T-cell (primary cell): ENCODE measurements at regions of chrX and their contacts with region 1.

Region 1: DNA sequence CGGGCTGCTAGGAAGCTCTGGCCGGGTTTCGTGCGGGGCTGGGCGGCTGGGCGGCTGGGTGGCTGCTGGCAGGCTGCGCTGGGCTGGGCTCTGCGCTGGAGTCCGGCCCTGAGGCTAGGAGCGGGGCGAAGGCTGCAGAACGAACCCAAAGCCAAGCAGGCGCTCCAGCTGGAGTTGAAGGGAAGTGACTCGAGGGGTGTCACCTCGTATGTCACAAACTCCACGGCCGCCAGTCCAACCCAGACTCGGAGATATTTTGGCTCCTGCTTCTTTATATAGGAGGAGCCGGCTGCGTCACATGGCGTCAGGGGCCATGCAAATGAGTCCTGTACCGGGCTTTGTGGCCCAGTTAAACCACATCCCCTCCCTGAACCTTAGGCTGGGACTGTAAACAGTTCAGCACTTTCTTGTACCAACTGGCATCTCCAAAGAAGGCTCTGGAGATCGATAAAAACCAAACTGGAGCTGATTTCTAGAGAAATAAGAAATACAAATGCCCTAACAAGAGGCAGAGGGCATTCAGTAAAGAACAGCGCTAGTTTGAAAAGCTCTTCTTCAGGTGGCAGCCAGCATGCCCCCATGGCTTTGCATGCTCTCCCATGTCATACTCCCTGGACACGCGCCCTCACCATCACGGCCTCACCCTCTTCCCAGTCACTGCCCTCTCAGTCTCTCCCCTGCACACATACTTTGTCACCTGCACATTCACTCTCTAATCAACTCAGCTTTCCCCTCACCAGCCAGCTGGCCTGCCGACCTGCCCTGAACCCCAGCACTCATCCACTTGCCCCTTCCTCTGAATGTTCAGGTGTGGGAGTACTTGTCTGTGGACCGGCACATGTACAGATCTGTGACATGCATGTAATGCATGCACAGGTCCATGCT is 58.5 kb downstream of the TSC22D3 start:
- DNase-seq: peak; percentile 77 to 94 (median 89)
- ATAC-seq: peak; percentile 71 to 87 (median 84)
- H3K4me3 ChIP-seq: peak overlapping the region; percentile 88 to 94
- H3K4me3 Mint-ChIP-seq: peak overlapping the region; percentile 89 to 96 (median 95)
- H3K27ac ChIP-seq: peak overlapping the region; percentile 99
- H3K27ac Mint-ChIP-seq: peak overlapping the region; percentile 94 to 100
- H3K4me1 ChIP-seq: peaks cover 11 to 51% of the 10 kb centered on the region in 2 experiments
- H3K4me1 Mint-ChIP-seq: peaks cover 49 to 59% (median 58%) of the 10 kb centered on the region in 3 donors
- H3K27me3 ChIP-seq: no peaks in the 10 kb centered on the region
- H3K27me3 Mint-ChIP-seq: peaks cover 0 to 8% of the 10 kb centered on the region in 2 donors

Region 2: GRCh38 chrX:107627838-107628661 is 89.0 kb before region 1 on chrX and contains the start of gene PRPS1:
- CTCF ChIA-PET with region 1: interaction called in 1 of 2 experiments, 4 read pairs
- POLR2A ChIA-PET with region 1: interaction called, 3 to 18 read pairs
- DNase-seq: peak; percentile 69 to 92 (median 87)
- ATAC-seq: peak; percentile 96 to 98 (median 97)
- H3K4me3 ChIP-seq: peak within 1 kb of the TSS; percentile 71 to 87
- H3K4me3 Mint-ChIP-seq: peak within 1 kb of the TSS; percentile 87 to 95 (median 93)
- H3K27ac ChIP-seq: peak within 1 kb of the TSS; percentile 86
- H3K27ac Mint-ChIP-seq: peak within 1 kb of the TSS; percentile 88
- H3K4me1 ChIP-seq: peaks cover 7% of the 10 kb centered on the region in 2 experiments
- H3K4me1 Mint-ChIP-seq: peaks cover 32 to 36% (median 32%) of the 10 kb centered on the region in 3 donors
- H3K27me3 ChIP-seq: no peaks in the 10 kb centered on the region
- H3K27me3 Mint-ChIP-seq: peaks cover 0 to 31% of the 10 kb centered on the region in 2 donors
- total RNA-seq, gene PRPS1: 57.9 to 74.0 (median 60.7) TPM

Region 3: GRCh38 chrX:107741404-107741790 is 24.3 kb after region 1 on chrX:
- CTCF ChIA-PET with region 1: interaction called, 7 to 10 read pairs
- POLR2A ChIA-PET with region 1: interaction called, 8 to 18 read pairs
- DNase-seq: peak in 3 of 35 experiments; percentile 1 to 3 (median 1)
- ATAC-seq: peak in 3 of 4 experiments; percentile 8 to 19 (median 9)
- H3K4me3 ChIP-seq: peak overlapping the region; percentile 21 to 25
- H3K4me3 Mint-ChIP-seq: peak overlapping the region; percentile 71 to 91 (median 77)
- H3K27ac ChIP-seq: peak overlapping the region; percentile 84
- H3K27ac Mint-ChIP-seq: peak overlapping the region; percentile 96 to 98
- H3K4me1 ChIP-seq: peaks cover 12 to 57% of the 10 kb centered on the region in 2 experiments
- H3K4me1 Mint-ChIP-seq: peaks cover 42 to 51% (median 46%) of the 10 kb centered on the region in 3 donors
- H3K27me3 ChIP-seq: no peaks in the 10 kb centered on the region
- H3K27me3 Mint-ChIP-seq: peaks cover 4 to 11% of the 10 kb centered on the region in 2 donors